Naive thymus-derived CD4-positive, alpha-beta T cell (primary cell): ENCODE measurements at regions of chr3 and their contacts with region 1.

Region 1: DNA sequence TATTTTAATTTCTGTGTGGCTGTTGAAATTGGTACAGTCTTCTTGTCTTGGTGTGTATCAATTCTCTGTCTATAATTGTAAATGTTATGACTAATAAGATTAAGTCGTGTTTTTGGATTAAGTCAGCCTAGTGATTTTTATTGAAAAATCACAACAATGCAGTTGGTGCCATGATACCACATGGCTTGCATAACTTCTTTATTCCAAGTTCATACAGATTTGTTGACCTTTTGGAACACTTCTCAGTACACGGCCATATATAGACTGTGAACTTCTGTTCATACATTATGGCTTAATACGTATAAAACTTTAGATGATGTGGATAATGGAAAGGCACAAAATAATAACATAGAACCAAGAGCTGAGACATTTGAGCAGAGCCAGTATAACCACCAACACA is 121.2 kb upstream of the NAALADL2 start:
- DNase-seq: no peak
- ATAC-seq: no peak
- H3K4me3 ChIP-seq: no peak overlapping the region
- H3K4me3 Mint-ChIP-seq: no peak overlapping the region
- H3K27ac ChIP-seq: no peak overlapping the region
- H3K27ac Mint-ChIP-seq: no peak overlapping the region
- H3K4me1 ChIP-seq: no peaks in the 10 kb centered on the region
- H3K4me1 Mint-ChIP-seq: no peaks in the 10 kb centered on the region
- H3K27me3 ChIP-seq: no peaks in the 10 kb centered on the region
- H3K27me3 Mint-ChIP-seq: no peaks in the 10 kb centered on the region

Region 2: DNA sequence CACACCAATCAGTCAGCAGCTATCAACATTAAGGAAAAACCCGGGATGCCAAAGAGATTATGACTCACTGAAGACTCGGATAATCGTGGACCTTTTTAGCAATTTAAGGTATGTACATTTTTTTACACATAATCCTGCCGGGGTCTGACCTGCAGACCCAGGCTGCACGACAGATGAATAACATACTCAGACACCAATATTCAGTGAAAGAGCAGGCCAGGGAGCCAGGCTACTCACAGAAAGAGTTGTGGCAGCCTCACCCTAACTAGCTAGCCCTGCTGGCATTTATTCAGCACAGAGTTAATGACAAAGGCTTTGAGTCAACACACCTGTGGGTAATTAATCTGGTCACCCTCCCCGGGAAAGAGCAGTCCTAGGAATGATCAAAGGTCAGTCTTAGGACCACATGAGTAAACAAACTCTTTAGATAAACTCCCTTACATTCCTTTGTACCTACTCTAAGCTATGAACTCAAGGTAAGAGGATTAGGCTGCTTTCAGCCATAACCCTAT is 1731.8 kb after region 1 on chr3:
- CTCF ChIA-PET with region 1: no interaction called
- POLR2A ChIA-PET with region 1: no interaction called
- intact Hi-C with region 1: loop called in 1 of 2 experiments (anchors 10 kb)
- DNase-seq: no peak
- ATAC-seq: no peak
- H3K4me3 ChIP-seq: no peak overlapping the region
- H3K4me3 Mint-ChIP-seq: no peak overlapping the region
- H3K27ac ChIP-seq: no peak overlapping the region
- H3K27ac Mint-ChIP-seq: no peak overlapping the region
- H3K4me1 ChIP-seq: no peaks in the 10 kb centered on the region
- H3K4me1 Mint-ChIP-seq: no peaks in the 10 kb centered on the region
- H3K27me3 ChIP-seq: no peaks in the 10 kb centered on the region
- H3K27me3 Mint-ChIP-seq: no peaks in the 10 kb centered on the region